ENCODE measurements at regions of chr16 and their contacts with region 1.

Region 1: GRCh38 chr16:2919511-2920255 is 8.0 kb downstream of the FLYWCH1 start:
- DNase-seq: peak; percentile 72
- H3K4me3 Mint-ChIP-seq: no peak overlapping the region
- H3K27ac Mint-ChIP-seq: peak overlapping the region; percentile 77
- H3K4me1 Mint-ChIP-seq: peaks cover 12% of the 10 kb centered on the region
- H3K27me3 Mint-ChIP-seq: no peaks in the 10 kb centered on the region
- CTCF ChIP-seq: peak; percentile 85

Region 2: GRCh38 chr16:2874912-2875362 is 44.7 kb before region 1 on chr16:
- CTCF ChIA-PET with region 1: interaction called, 20 read pairs
- POLR2A ChIA-PET with region 1: interaction called, 5 read pairs
- intact Hi-C with region 1: loop called (anchors 1 kb)
- DNase-seq: peak; percentile 77
- H3K4me3 Mint-ChIP-seq: no peak overlapping the region
- H3K27ac Mint-ChIP-seq: no peak overlapping the region
- H3K4me1 Mint-ChIP-seq: no peaks in the 10 kb centered on the region
- H3K27me3 Mint-ChIP-seq: no peaks in the 10 kb centered on the region
- CTCF ChIP-seq: peak; percentile 94

Region 3: DNA sequence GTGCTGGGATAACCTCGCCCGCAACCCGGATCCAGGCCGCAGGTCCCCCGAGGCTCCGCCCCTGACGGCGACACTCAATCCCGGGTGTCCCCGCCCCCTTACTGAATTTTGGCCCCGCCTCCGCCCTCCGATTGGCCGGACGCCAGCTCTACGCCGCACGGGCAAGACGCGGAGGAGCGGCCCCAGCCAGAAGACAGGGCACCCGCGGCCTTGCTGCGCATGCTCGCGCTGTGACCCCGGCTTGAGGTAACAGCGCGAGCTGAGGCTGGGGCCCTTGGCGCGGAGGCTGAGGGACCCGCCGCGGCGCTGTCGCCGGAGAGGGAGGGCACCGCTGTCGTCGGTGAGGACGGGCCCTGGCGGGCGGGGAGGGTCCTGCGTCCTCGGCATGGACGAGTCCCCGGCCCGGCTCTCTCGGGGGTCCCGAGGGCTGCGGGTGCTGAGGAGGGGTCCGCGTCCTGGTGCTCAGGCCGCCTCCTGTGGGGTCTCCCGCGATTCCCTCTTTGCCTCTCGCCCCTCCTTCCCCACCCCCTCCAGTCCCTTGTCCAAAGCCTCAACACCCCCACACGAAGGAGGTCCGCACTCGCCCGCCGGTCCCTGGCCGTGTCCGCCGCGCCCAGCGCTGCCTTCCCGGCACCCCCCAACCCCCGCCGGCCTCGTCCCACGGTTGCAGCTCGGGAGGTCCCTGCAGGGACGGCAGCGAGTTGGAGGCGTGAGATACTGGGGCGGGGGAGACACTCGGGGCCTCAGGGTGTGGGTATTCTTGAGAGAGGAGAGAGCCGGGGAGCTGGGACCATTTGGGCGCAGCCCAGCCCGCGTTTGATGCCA is 36.4 kb before region 1 on chr16 and contains the start of gene FLYWCH2:
- CTCF ChIA-PET with region 1: interaction called, 6 read pairs
- POLR2A ChIA-PET with region 1: interaction called, 10 read pairs
- intact Hi-C with region 1: loop called (anchors 2 kb)
- DNase-seq: peak; percentile 96
- H3K4me3 Mint-ChIP-seq: peak within 1 kb of the TSS; percentile 77
- H3K27ac Mint-ChIP-seq: peak within 1 kb of the TSS; percentile 73
- H3K4me1 Mint-ChIP-seq: peaks cover 5% of the 10 kb centered on the region
- H3K27me3 Mint-ChIP-seq: no peaks in the 10 kb centered on the region
- CTCF ChIP-seq: no peak
- total RNA-seq, gene FLYWCH2: 24.4 and 27.7 TPM in 2 replicates

Region 4: GRCh38 chr16:2905431-2906387 is 14.0 kb before region 1 on chr16:
- CTCF ChIA-PET with region 1: interaction called, 22 read pairs
- POLR2A ChIA-PET with region 1: interaction called, 25 read pairs
- intact Hi-C with region 1: loop called (anchors 1 kb)
- DNase-seq: peak; percentile 99
- H3K4me3 Mint-ChIP-seq: peak overlapping the region; percentile 84
- H3K27ac Mint-ChIP-seq: peak overlapping the region; percentile 91
- H3K4me1 Mint-ChIP-seq: peaks cover 17% of the 10 kb centered on the region
- H3K27me3 Mint-ChIP-seq: no peaks in the 10 kb centered on the region
- CTCF ChIP-seq: no peak

Region 5: DNA sequence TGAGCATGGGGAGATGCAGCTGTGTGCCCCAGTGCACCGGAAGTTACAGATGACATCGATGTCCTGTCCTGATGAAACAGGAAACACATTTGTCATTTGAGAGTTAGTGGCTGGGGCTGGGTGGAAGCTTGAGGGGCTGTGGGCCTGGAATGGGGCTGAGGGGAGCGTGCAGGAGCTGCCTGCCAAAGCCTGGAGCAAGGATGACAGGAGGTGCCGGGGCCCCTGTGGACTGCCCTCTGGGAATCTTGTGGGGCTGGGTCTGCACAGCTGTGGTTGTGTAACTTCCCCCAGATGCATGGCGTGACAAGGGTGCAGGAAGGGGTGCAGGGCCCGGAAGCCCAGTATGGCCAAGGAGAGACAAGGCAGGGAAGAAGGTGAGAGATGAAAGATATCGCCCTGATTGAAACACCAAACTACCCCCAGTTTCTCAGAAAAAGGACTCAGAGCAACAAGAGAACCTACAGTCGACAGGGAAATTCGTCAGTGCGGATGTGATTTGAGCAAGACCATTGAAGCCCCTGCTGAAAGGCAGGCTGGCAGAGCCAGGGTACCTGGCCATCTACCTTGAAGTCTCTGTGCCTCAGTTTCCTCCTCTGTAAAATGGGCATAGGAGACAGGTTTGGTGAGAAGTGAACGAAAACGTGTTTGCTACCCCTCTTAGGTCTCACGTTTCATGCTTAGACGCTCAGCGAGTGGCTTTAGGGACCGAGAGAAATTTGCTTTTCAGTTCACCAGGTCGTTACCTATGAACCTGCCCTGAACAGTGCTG is 135.5 kb after region 1 on chr16:
- CTCF ChIA-PET with region 1: no interaction called
- POLR2A ChIA-PET with region 1: no interaction called
- intact Hi-C with region 1: no loop called
- DNase-seq: no peak
- H3K4me3 Mint-ChIP-seq: no peak overlapping the region
- H3K27ac Mint-ChIP-seq: no peak overlapping the region
- H3K4me1 Mint-ChIP-seq: no peaks in the 10 kb centered on the region
- H3K27me3 Mint-ChIP-seq: peaks cover 22% of the 10 kb centered on the region
- CTCF ChIP-seq: no peak